Dendritic cell treated with granulocyte-macrophage colony-stimulating factor and Interleukin-4, amounts not matched to agents 40 ng/mL and 50 ng/mL, for 4 days (primary cell): ENCODE measurements at regions of chr1 and their contacts with region 1.

Region 1: GRCh38 chr1:175481126-175482066 is 262.0 kb downstream of the TNR start:
- H3K4me3 Mint-ChIP-seq: no peak overlapping the region
- H3K27ac Mint-ChIP-seq: no peak overlapping the region
- H3K4me1 Mint-ChIP-seq: no peaks in the 10 kb centered on the region
- H3K27me3 Mint-ChIP-seq: no peaks in the 10 kb centered on the region

Region 2: DNA sequence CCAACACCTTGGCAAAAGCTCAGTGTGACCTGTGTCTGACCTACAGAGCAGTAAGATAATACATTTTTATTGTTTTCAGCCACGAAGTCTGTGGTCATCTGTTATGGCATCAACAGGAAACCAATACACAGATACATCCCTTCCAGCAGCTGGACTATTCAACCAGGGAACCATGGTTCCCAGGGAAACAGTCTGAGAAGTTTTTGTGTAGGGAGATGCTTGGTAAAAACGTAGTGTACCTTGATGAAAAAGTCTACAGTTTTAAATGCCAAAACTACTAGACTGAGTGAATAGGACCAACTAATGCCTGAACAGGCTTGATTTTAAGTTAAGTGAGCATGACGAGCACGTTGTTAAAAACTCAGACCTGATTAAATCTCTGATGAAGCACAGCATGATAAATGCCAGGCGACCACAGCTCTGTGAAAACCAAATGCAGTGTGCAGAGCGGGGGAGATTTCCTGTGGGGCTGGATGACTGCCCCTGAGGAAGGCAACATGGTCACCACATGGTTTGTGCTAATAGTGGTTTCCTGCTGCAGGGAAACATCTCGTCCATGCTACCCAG is 33.1 kb after region 1 on chr1:
- intact Hi-C with region 1: no loop called
- H3K4me3 Mint-ChIP-seq: no peak overlapping the region
- H3K27ac Mint-ChIP-seq: no peak overlapping the region
- H3K4me1 Mint-ChIP-seq: peaks cover 19% of the 10 kb centered on the region
- H3K27me3 Mint-ChIP-seq: peaks cover 24% of the 10 kb centered on the region

Region 3: DNA sequence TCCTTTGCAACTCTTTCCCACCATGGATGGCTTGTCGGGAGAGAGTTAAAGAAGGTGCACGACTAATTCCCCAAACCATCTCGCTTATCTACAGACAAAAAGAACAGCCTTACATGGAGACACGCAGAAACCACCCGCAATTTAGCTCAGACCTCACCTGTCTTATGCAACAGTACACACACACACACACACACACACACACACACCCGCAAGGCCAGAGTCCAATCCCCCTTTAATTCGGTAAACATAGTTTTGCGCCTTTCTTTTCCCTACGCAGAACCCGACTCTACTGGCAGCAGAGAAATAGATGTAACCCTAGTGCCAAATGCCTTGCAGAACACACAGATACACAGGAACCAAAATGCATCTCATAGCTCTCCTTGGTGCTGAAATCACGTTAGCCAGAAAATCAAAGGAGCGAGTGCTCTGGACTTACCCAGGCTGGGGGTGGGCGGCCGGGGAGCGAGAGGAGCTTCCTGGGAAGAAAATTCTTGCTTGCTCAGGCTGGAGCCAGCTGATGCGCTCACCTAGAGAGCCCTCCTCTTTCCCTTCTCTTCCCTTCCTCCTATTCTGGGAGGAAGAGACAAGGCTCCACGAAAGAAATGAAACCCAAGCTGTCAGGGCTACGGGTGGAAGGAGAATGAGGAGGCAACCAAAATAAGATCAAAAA is 261.5 kb after region 1 on chr1:
- intact Hi-C with region 1: loop called (anchors 2 kb)
- H3K4me3 Mint-ChIP-seq: no peak overlapping the region
- H3K27ac Mint-ChIP-seq: no peak overlapping the region
- H3K4me1 Mint-ChIP-seq: peaks cover 6% of the 10 kb centered on the region
- H3K27me3 Mint-ChIP-seq: peaks cover 35% of the 10 kb centered on the region

Region 4: GRCh38 chr1:175887981-175888433 is 406.6 kb after region 1 on chr1:
- intact Hi-C with region 1: loop called (anchors 5 kb)
- H3K4me3 Mint-ChIP-seq: no peak overlapping the region
- H3K27ac Mint-ChIP-seq: no peak overlapping the region
- H3K4me1 Mint-ChIP-seq: no peaks in the 10 kb centered on the region
- H3K27me3 Mint-ChIP-seq: peaks cover 3% of the 10 kb centered on the region

Region 5: DNA sequence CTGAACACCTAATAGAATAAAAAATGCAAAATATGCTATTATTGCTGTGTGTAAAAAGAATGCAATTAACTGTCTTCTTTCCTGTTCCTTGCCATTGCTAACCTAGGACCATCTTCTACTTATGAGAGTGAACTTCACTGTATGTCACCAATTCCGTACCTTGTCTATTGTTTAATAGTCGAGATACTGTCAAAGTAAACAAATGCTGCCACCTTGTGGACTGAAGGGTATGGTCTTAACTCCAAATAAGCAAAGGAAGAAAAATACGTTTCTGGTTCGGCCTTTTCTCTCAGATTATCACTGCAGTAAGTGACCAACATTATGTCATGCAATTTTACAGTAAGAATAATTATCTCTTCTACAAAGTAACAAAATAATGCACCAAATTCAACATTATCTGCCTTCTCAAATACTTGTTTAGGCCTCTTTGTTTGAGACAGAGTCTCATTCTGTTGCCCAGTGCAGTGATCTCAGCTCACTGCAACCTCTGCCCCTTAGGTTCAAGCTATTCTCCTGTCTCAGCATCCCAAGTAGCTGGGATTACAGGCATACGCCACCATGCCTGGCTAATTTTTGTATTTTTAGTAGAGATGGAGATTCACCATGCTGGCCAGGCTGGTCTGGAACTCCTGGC is 592.2 kb after region 1 on chr1:
- intact Hi-C with region 1: loop called (anchors 5 kb)
- H3K4me3 Mint-ChIP-seq: no peak overlapping the region
- H3K27ac Mint-ChIP-seq: no peak overlapping the region
- H3K4me1 Mint-ChIP-seq: no peaks in the 10 kb centered on the region
- H3K27me3 Mint-ChIP-seq: no peaks in the 10 kb centered on the region